Activated naive CD4-positive, alpha-beta T cell treated with anti-CD3 and anti-CD28 coated beads for 36 hours (primary cell): ENCODE measurements at regions of chr2 and their contacts with region 1.

Region 1: GRCh38 chr2:73979686-73980085 is 5.0 kb upstream of the TET3 start:
- DNase-seq: peak; percentile 32
- H3K4me3 Mint-ChIP-seq: peak overlapping the region; percentile 53
- H3K27ac Mint-ChIP-seq: peak overlapping the region; percentile 88
- H3K4me1 Mint-ChIP-seq: peaks cover 62% of the 10 kb centered on the region
- H3K27me3 Mint-ChIP-seq: no peaks in the 10 kb centered on the region

Region 2: GRCh38 chr2:73952499-73953458 is 26.9 kb before region 1 on chr2:
- CTCF ChIA-PET with region 1: no interaction called
- intact Hi-C with region 1: no loop called
- DNase-seq: no peak
- H3K4me3 Mint-ChIP-seq: no peak overlapping the region
- H3K27ac Mint-ChIP-seq: no peak overlapping the region
- H3K4me1 Mint-ChIP-seq: peaks cover 56% of the 10 kb centered on the region
- H3K27me3 Mint-ChIP-seq: no peaks in the 10 kb centered on the region

Region 3: GRCh38 chr2:73963385-73964120 is 16.1 kb before region 1 on chr2:
- CTCF ChIA-PET with region 1: interaction called, 3 read pairs
- intact Hi-C with region 1: loop called (anchors 1 kb)
- DNase-seq: peak; percentile 70
- H3K4me3 Mint-ChIP-seq: peak overlapping the region; percentile 38
- H3K27ac Mint-ChIP-seq: peak overlapping the region; percentile 69
- H3K4me1 Mint-ChIP-seq: peaks cover 39% of the 10 kb centered on the region
- H3K27me3 Mint-ChIP-seq: no peaks in the 10 kb centered on the region

Region 4: GRCh38 chr2:74391209-74391579 is 411.5 kb after region 1 on chr2:
- CTCF ChIA-PET with region 1: no interaction called
- intact Hi-C with region 1: no loop called
- DNase-seq: peak; percentile 26
- H3K4me3 Mint-ChIP-seq: peak overlapping the region; percentile 92
- H3K27ac Mint-ChIP-seq: peak overlapping the region; percentile 69
- H3K4me1 Mint-ChIP-seq: peaks cover 4% of the 10 kb centered on the region
- H3K27me3 Mint-ChIP-seq: no peaks in the 10 kb centered on the region